SK-N-SH (cell line): ENCODE measurements at regions of chr3 and their contacts with region 1.

Region 1: DNA sequence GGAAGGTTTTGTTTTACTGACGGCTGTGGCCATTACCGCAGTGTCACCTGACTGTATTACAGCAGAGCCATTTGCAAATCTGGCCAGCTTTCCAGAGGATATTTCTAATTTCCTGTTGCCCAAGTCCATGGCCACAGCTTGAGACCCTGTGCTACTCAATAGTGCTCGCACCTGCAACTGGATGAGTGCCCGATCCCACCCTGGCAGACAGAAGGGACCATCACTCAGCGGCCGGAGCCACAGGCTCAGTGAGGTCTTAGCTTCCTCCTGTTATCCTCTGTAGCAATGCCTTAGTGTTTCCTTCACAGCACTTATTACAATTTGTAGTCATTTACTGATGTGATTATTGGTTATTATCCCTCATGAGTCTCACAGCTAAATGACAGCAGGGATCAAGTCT is 184.8 kb downstream of the LRRN1 start:
- DNase-seq: no peak
- H3K4me3 ChIP-seq: no peak overlapping the region
- H3K27ac ChIP-seq: no peak overlapping the region
- H3K4me1 ChIP-seq: no peaks in the 10 kb centered on the region
- H3K27me3 ChIP-seq: no peaks in the 10 kb centered on the region
- CTCF ChIP-seq: no peak
- EP300 ChIP-seq: no peak
- RAD21 ChIP-seq: no peak

Region 2: DNA sequence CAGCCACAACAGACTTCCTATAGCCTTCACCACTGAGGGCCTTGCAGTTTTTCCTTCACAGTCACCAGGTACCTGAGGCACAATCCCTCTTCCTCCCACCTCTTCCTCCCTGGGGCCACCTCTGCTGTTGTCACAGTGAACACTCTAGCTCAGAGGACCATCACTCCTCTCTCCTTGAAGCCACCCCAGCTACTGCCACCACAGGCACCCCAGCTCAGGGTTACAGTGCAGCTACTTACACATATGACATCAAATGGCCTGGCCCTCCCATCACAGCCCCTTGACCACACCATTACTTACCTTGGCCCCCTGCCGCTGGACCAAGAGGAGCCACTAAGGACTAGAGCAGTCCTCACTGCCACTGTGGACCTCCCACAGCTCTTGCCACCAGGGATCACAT is 591.1 kb before region 1 on chr3:
- CTCF ChIA-PET with region 1: no interaction called
- POLR2A ChIA-PET with region 1: no interaction called
- DNase-seq: no peak
- H3K4me3 ChIP-seq: no peak overlapping the region
- H3K27ac ChIP-seq: no peak overlapping the region
- H3K4me1 ChIP-seq: no peaks in the 10 kb centered on the region
- H3K27me3 ChIP-seq: no peaks in the 10 kb centered on the region
- CTCF ChIP-seq: no peak
- EP300 ChIP-seq: no peak
- RAD21 ChIP-seq: no peak

Region 3: DNA sequence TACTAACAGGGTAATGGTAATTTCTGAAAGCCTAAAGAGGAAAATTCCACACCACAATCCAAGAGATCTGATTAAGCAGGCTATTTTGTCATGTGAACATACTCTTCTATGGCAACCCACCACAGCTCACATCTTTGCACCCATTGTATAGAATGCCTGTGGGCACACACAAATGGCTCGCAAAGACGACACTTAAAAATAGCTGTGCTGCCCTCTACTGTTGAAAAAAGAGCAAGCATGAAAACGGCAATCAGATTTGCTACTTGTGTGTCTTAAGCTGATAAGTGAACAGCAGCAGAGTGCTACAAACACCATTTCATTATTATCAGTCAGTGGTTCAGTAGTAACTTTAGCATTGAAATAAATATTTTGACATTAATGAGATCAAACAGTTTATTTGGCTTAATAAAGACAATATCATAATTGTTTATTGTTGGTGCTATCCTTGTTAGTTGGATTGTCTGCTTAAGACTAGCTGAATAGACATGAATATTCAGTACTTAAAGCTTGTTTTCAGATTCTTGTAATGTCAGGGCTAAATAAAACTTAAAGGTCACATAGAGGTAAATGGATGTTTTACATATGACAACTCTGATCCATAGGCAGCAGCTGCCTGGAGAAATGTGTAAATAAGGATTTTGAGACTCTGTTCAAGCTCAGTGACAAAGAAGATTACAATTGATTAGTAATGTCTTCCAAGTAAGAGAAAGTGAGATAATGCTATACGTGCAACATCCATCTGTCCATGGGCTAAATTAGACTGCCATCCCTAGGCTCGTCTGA is 14.3 kb after region 1 on chr3:
- CTCF ChIA-PET with region 1: interaction called, 13 read pairs
- POLR2A ChIA-PET with region 1: no interaction called
- DNase-seq: peak; percentile 38
- H3K4me3 ChIP-seq: no peak overlapping the region; a peak in 1 of 4 replicates
- H3K27ac ChIP-seq: no peak overlapping the region
- H3K4me1 ChIP-seq: no peaks in the 10 kb centered on the region
- H3K27me3 ChIP-seq: no peaks in the 10 kb centered on the region
- CTCF ChIP-seq: peak; percentile 46
- EP300 ChIP-seq: no peak
- RAD21 ChIP-seq: peak; percentile 78

Region 4: GRCh38 chr3:4340411-4341335 is 356.6 kb after region 1 on chr3:
- CTCF ChIA-PET with region 1: no interaction called
- POLR2A ChIA-PET with region 1: no interaction called
- DNase-seq: no peak
- H3K4me3 ChIP-seq: no peak overlapping the region
- H3K27ac ChIP-seq: no peak overlapping the region
- H3K4me1 ChIP-seq: peaks cover 5% of the 10 kb centered on the region in 2 experiments; a peak in 2 of 4 replicates
- H3K27me3 ChIP-seq: no peaks in the 10 kb centered on the region
- CTCF ChIP-seq: no peak
- EP300 ChIP-seq: no peak
- RAD21 ChIP-seq: no peak